Esophagus muscularis mucosa (tissue), 4 donors: ENCODE measurements at regions of chr13 and their contacts with region 1.

Region 1: GRCh38 chr13:50529154-50529882 is 314.2 kb downstream of the DLEU7 start:
- DNase-seq: no peak
- H3K4me3 ChIP-seq: peak overlapping the region; percentile 2 to 31 (median 22)
- H3K27ac ChIP-seq: peak overlapping the region; percentile 40 to 71 (median 66)
- H3K4me1 ChIP-seq: peaks cover 34 to 51% (median 41%) of the 10 kb centered on the region in 4 donors
- H3K27me3 ChIP-seq: no peaks in the 10 kb centered on the region
- CTCF ChIP-seq: no peak
- EP300 ChIP-seq: no peak
- POLR2A ChIP-seq: no peak

Region 2: GRCh38 chr13:50170447-50171037 is 358.8 kb before region 1 on chr13:
- intact Hi-C with region 1: loop called (anchors 5 kb)
- DNase-seq: no peak
- H3K4me3 ChIP-seq: no peak overlapping the region
- H3K27ac ChIP-seq: no peak overlapping the region
- H3K4me1 ChIP-seq: peaks cover 0 to 6% (median 0%) of the 10 kb centered on the region in 4 donors
- H3K27me3 ChIP-seq: no peaks in the 10 kb centered on the region
- CTCF ChIP-seq: peak; percentile 46 to 52 (median 49)
- EP300 ChIP-seq: no peak
- POLR2A ChIP-seq: no peak

Region 3: DNA sequence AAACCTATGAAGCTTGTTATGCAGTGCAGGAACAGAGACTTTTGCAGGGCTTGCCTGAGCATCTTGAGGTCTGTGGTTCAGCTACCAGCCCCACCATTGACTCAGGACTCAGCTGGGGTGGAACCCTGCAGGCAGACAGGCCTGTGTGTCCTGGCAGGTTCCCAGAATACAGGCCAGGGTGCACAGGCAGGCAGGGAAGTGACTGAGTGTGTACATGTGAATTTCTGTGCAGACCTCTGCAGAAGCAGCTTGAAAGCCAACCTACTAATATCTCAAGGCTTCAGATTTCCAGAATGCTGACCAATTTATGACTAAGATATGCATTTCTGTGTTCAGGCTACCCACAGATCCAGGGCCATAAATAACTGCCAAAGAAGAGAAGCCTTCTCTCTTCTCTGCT is 59.8 kb after region 1 on chr13:
- intact Hi-C with region 1: no loop called
- DNase-seq: no peak
- H3K4me3 ChIP-seq: no peak overlapping the region
- H3K27ac ChIP-seq: no peak overlapping the region
- H3K4me1 ChIP-seq: peaks cover under 1 to 7% (median 4%) of the 10 kb centered on the region in 4 donors
- H3K27me3 ChIP-seq: no peaks in the 10 kb centered on the region
- CTCF ChIP-seq: no peak
- EP300 ChIP-seq: no peak
- POLR2A ChIP-seq: no peak

Region 4: GRCh38 chr13:50608370-50608769 is 79.1 kb after region 1 on chr13:
- intact Hi-C with region 1: no loop called
- DNase-seq: no peak
- H3K4me3 ChIP-seq: no peak overlapping the region
- H3K27ac ChIP-seq: no peak overlapping the region
- H3K4me1 ChIP-seq: no peaks in the 10 kb centered on the region
- H3K27me3 ChIP-seq: no peaks in the 10 kb centered on the region
- CTCF ChIP-seq: no peak
- EP300 ChIP-seq: no peak
- POLR2A ChIP-seq: no peak

Region 5: GRCh38 chr13:50911937-50912795 is 382.8 kb after region 1 on chr13:
- intact Hi-C with region 1: loop called (anchors 10 kb)
- DNase-seq: no peak
- H3K4me3 ChIP-seq: no peak overlapping the region
- H3K27ac ChIP-seq: peak overlapping the region; percentile 7 to 91 (median 66)
- H3K4me1 ChIP-seq: peaks cover 54 to 70% (median 62%) of the 10 kb centered on the region in 4 donors
- H3K27me3 ChIP-seq: no peaks in the 10 kb centered on the region
- CTCF ChIP-seq: peak; percentile 80 to 89 (median 89)
- EP300 ChIP-seq: no peak
- POLR2A ChIP-seq: no peak